ENCODE measurements at regions of chr12 and their contacts with region 1.

Region 1: DNA sequence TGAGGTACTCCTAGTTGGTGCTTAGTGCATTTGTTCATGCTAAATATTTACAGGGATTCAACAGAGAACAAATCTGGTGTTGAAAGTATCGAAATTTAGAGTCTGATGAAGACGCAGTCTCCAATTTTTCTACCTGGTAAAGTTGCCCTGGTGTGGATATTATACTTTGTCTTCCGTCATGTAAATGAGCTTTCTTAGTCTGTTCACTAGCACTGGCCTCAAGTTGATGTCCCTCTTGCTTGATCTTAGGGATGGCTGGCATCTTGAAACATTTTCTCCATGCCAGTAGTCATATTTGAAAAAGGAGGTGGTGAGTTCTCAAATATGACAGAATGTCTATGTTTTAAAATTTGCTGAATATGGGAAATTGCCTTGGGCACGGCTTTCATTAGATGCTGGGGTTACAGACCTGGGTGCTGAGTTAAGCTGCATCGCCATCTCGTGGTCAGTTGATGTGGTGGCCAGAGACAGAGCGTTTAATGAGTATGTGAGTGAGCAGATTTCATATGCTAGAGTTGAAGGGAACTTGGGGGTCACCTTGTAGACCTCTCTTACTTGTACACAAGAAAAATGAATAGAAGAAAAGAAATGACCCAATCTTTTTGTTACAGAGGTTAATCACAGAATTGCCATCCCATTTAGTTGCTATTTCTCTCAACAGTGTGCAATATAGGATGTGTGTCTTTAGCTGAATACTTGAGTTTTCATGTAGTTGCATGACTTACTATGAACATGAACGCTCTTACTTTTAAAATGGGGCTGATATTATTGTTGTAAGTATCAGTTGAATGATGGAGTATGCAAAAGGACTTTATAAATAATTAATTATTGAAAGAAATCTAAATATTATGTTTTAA is 172.8 kb upstream of the DCN start:
- DNase-seq: peak; percentile 20 to 94 (median 71)

Region 2: DNA sequence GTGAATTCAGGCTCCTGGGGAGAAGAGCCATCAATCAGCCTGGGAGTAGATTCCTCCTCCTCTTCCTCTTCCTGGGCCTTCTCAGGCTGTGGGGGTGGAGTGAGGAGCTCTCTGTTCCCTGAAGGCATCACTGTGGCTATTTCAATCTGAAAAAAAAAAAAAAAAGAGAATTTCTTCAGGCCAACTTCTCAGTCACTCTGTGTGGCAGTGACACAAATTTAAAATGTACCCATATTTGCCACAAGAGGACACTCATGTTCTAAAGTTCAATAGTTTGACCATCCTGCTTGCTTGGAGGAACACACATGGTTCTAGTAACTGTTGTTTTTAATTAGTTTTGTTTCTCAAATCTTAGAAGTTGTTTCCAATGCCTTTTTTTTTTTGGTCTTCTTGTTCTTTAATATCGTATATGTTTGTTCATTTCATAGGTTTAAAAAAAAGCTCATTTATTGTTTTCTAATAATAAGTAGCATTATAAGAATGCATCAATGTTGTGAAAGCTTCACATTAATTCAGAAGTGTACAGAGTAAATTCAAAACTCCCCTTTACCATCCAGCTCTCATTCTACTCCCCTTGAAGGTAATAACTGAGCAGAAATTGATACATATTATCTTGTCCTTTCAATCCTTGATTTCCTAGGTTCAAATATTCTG is 377.1 kb before region 1 on chr12:
- intact Hi-C with region 1: loop called (anchors 5 kb)
- DNase-seq: peak in 1 of 10 donors; percentile 25

Region 3: DNA sequence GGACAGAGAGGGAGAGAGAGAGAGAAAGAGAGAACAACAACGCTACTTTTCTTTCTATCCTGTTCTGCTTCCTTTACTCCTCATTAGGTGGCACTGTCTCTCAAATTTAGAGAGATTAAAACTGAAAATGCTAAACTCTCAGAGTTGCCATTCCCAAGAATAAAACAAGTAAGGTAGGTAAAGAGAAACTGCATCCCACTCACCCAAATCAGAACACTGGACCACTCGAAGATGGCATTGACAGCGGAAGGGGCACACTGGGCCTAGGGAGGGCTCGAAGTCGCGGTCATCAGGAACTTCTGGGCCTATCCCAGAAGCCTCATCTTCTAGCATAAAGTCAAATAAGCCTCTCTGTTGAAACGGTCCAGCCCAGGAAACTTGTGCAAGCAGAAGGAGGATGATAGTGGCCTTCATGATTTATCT is 177.2 kb before region 1 on chr12:
- intact Hi-C with region 1: loop called (anchors 10 kb)
- DNase-seq: no peak

Region 4: DNA sequence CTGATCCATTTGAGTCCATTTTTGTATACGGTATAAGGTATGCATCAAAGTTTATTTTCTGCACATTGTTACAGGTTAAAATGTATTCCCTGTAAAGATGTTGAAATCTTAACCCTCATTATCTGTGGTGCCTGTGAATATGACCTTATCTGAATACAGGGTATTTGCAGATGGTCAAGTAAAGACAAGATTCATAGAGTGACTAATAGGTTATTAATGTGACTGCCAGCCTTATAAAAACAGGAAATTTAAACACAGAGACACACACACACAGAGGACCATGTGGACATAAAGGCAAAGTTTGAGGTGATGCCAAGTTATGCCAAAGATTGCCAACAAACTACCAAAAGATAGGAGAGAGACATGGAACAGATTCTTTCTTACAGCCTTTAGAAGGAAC is 174.5 kb after region 1 on chr12:
- intact Hi-C with region 1: no loop called
- DNase-seq: no peak